Caco-2 (cell line): ENCODE measurements at regions of chr14 and their contacts with region 1.

Region 1: GRCh38 chr14:102524466-102525218 is 15.1 kb upstream of the ANKRD9 start:
- DNase-seq: peak; percentile 99
- H3K4me3 ChIP-seq: peak overlapping the region; percentile 46
- H3K4me3 Mint-ChIP-seq: peak overlapping the region; percentile 94
- H3K27ac Mint-ChIP-seq: peak overlapping the region; percentile 92
- H3K4me1 ChIP-seq: peaks cover 11% of the 10 kb centered on the region; the same call in 1 of the 2 replicates
- H3K4me1 Mint-ChIP-seq: peaks cover 7% of the 10 kb centered on the region
- H3K27me3 ChIP-seq: no peaks in the 10 kb centered on the region
- H3K27me3 Mint-ChIP-seq: no peaks in the 10 kb centered on the region
- CTCF ChIP-seq: peak; percentile 92 to 97

Region 2: GRCh38 chr14:102568114-102568621 is 43.5 kb after region 1 on chr14:
- CTCF ChIA-PET with region 1: interaction called, 3 read pairs
- POLR2A ChIA-PET with region 1: interaction called, 11 read pairs
- intact Hi-C with region 1: loop called (anchors 1 kb)
- DNase-seq: peak; percentile 72 to 81
- H3K4me3 ChIP-seq: no peak overlapping the region
- H3K4me3 Mint-ChIP-seq: peak overlapping the region; percentile 64
- H3K27ac Mint-ChIP-seq: peak overlapping the region; percentile 93
- H3K4me1 ChIP-seq: peaks cover 36% of the 10 kb centered on the region
- H3K4me1 Mint-ChIP-seq: peaks cover 16% of the 10 kb centered on the region
- H3K27me3 ChIP-seq: no peaks in the 10 kb centered on the region
- H3K27me3 Mint-ChIP-seq: no peaks in the 10 kb centered on the region
- CTCF ChIP-seq: no peak

Region 3: DNA sequence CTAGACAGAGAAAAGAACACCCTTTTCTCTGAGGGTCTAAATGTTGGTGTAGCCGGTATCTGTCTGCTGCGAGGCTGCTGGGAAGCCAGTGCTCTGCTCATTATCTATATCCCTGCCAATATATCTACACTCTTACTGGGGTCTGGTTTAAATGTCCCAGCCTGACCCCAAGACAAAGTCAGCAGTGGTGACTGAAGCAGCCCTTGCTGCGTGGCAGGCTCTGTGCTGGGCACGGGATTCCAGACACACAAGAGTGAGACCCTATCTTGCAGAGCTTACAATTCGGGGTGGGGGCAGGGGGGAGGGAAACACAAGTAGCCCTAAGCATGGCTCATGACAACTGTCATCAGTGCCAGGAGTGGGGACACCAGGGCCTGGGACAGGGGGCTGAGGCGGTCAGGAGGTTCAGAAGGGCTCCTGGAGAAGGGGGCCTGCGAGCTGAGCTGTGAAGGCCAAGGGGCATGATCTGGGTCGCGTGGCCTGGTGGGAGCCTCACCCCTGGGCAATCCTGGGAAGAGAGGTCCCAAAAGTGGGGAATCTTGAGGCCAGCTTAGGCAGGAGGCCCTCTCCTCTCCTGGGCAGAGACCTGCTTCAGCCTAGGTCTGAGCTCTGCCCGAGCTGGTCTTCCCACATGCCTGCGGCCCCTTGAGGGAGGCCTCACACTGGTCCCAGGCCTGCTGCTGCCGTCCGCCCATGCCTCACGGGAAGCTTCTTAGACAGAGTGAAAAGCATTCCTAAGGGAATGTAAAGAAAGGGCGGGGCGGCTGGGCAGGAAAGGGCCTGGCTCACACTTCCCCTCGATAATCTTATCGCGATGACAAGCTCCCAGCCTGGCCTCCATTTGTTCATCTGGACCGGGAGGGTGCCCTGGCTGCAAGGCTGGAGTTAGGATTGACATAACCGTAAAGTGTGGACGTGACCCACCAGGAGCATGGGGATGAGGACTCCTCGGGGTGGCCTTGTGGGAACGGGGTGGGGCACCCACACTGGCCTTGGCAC is 60.5 kb after region 1 on chr14:
- CTCF ChIA-PET with region 1: interaction called, 18 read pairs
- POLR2A ChIA-PET with region 1: interaction called, 3 read pairs
- intact Hi-C with region 1: loop called (anchors 2 kb)
- DNase-seq: peak; percentile 73 to 89
- H3K4me3 ChIP-seq: no peak overlapping the region
- H3K4me3 Mint-ChIP-seq: no peak overlapping the region
- H3K27ac Mint-ChIP-seq: peak overlapping the region; percentile 83
- H3K4me1 ChIP-seq: peaks cover 43% of the 10 kb centered on the region
- H3K4me1 Mint-ChIP-seq: peaks cover 29% of the 10 kb centered on the region
- H3K27me3 ChIP-seq: no peaks in the 10 kb centered on the region
- H3K27me3 Mint-ChIP-seq: no peaks in the 10 kb centered on the region
- CTCF ChIP-seq: no peak

Region 4: GRCh38 chr14:102694530-102695166 is 170.0 kb after region 1 on chr14:
- CTCF ChIA-PET with region 1: interaction called, 16 read pairs
- POLR2A ChIA-PET with region 1: no interaction called
- intact Hi-C with region 1: loop called (anchors 5 kb)
- DNase-seq: peak; percentile 45 to 71
- H3K4me3 ChIP-seq: no peak overlapping the region
- H3K4me3 Mint-ChIP-seq: no peak overlapping the region
- H3K27ac Mint-ChIP-seq: no peak overlapping the region
- H3K4me1 ChIP-seq: peaks cover 51% of the 10 kb centered on the region
- H3K4me1 Mint-ChIP-seq: peaks cover 39% of the 10 kb centered on the region
- H3K27me3 ChIP-seq: no peaks in the 10 kb centered on the region
- H3K27me3 Mint-ChIP-seq: no peaks in the 10 kb centered on the region
- CTCF ChIP-seq: peak; percentile 55 to 56